Lower lobe of right lung (tissue), 2 donors: ENCODE measurements at regions of chr22 and their contacts with region 1.

Region 1: GRCh38 chr22:23970816-23971486 is 3.3 kb downstream of the DDT start:
- DNase-seq: no peak
- ATAC-seq: no peak
- H3K4me3 ChIP-seq: no peak overlapping the region
- H3K27ac ChIP-seq: no peak overlapping the region
- H3K4me1 ChIP-seq: no peaks in the 10 kb centered on the region
- H3K27me3 ChIP-seq: no peaks in the 10 kb centered on the region
- CTCF ChIP-seq: no peak

Region 2: DNA sequence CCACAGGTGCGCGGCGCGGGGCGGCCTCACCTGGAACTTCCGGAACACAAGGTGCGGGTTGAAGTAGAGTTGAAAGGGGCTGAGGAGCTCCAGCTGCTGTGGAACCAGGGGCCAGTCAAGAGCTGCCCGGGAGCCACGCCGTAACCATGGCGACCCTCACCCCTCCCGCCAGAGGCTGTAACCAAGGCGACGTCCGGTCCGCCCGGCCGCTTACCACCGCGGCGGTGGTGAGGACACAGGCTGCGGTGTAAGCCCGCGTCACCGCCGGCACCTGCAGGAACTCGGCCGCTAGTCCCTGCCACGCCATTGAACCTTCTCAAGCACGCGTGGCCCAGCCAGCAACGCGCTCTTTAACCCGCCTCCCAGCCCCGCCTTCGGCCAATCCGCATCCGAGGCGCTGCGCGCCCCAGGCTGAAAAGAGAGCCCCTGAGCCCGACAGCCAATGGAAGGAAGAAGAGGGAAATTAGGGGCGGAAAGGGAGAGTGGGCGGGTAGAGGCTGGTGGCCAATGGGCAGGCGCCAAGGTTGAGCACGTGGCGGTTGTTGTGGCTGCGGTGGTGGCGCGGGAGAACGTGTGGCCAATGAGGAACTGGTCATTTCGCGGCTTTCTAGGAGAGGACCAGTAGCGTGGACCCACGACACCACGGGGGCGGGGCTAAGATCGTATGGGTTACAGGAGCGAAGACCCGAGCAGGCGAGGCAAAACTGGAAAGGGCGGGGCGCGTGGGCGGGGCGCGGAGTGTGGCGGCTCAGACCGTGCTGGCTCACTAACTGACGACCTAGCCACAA is 132.1 kb before region 1 on chr22 and contains the start of gene DERL3:
- intact Hi-C with region 1: no loop called
- DNase-seq: peak; percentile 100
- ATAC-seq: peak; percentile 97
- H3K4me3 ChIP-seq: peak within 1 kb of the TSS; percentile 69
- H3K27ac ChIP-seq: peak within 1 kb of the TSS; percentile 2
- H3K4me1 ChIP-seq: peaks cover 17% of the 10 kb centered on the region
- H3K27me3 ChIP-seq: no peaks in the 10 kb centered on the region
- CTCF ChIP-seq: no peak
- total RNA-seq, gene DERL3: 5.8 TPM

Region 3: DNA sequence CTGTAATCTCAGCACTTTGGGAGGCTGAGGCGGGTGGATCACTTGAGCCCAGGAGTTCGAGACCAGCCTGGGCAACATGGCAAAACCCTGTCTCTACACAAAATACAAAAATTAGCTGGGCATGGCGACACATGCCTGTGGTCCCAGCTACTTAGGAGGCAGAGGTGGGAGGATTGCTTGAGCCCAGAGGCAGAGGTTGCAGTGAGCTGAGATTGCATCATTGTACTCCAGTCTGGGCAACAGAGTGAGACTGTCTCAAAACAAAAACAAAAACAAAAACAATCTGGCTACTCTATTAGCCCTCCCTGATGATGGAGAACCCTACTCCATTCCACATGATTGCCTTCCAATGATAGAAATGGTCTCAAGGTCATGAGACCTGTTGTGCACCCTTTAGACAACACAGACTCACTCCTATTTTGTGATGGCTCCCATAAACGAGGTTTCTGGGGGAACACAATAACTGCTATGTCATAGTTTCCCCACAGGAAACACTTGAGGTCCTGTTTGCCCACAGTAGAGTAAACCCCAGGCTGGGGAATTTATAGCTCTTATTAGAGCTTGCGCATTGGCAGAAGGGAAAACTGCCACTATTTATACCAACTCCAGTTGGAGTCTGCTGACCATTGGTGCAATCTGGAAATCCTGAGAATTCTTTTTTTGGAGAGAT is 48.2 kb before region 1 on chr22:
- intact Hi-C with region 1: loop called (anchors 10 kb)
- DNase-seq: no peak
- ATAC-seq: no peak
- H3K4me3 ChIP-seq: no peak overlapping the region
- H3K27ac ChIP-seq: no peak overlapping the region
- H3K4me1 ChIP-seq: no peaks in the 10 kb centered on the region
- H3K27me3 ChIP-seq: no peaks in the 10 kb centered on the region
- CTCF ChIP-seq: no peak